ENCODE measurements at regions of chr4 and their contacts with region 1.

Region 1: GRCh38 chr4:141174457-141174856 is 41.2 kb upstream of the RNF150 start:
- DNase-seq: no peak
- ATAC-seq: peak; percentile 27; the same call in 2 of the 3 replicates
- H3K4me3 ChIP-seq: no peak overlapping the region
- H3K27ac ChIP-seq: no peak overlapping the region
- H3K4me1 ChIP-seq: no peaks in the 10 kb centered on the region
- H3K27me3 ChIP-seq: no peaks in the 10 kb centered on the region; a peak in 1 of 4 replicates
- CTCF ChIP-seq: no peak
- EP300 ChIP-seq: no peak
- POLR2A ChIP-seq: no peak
- RAD21 ChIP-seq: no peak

Region 2: GRCh38 chr4:141011901-141012315 is 162.5 kb before region 1 on chr4:
- CTCF ChIA-PET with region 1: no interaction called
- POLR2A ChIA-PET with region 1: no interaction called
- RAD21 ChIA-PET with region 1: no interaction called
- SMC1A ChIA-PET with region 1: no interaction called
- in situ Hi-C with region 1: no loop called
- intact Hi-C with region 1: no loop called
- DNase-seq: no peak
- ATAC-seq: no peak
- H3K4me3 ChIP-seq: no peak overlapping the region
- H3K27ac ChIP-seq: no peak overlapping the region
- H3K4me1 ChIP-seq: no peaks in the 10 kb centered on the region
- H3K27me3 ChIP-seq: no peaks in the 10 kb centered on the region
- CTCF ChIP-seq: no peak
- EP300 ChIP-seq: no peak
- POLR2A ChIP-seq: no peak
- RAD21 ChIP-seq: no peak

Region 3: DNA sequence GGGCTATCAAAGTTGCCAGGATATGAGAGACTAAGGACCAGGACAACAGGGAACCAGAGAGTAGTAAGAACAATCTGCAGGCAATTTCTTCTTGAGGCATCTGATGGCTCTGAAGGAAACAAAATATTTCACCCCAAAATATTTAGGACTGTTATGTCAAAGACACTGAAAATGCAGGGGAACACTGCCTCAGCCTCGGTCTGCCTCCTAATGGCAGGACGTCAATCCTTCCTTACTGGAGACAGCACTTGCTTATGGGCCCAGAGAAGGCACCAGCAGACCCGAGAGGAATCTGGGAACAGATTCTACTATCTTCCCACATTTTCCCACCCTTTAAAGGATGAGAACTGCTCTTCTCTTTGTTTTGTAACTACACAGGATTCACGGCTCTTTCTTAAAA is 64.5 kb before region 1 on chr4:
- CTCF ChIA-PET with region 1: no interaction called
- POLR2A ChIA-PET with region 1: no interaction called
- RAD21 ChIA-PET with region 1: no interaction called
- SMC1A ChIA-PET with region 1: no interaction called
- in situ Hi-C with region 1: no loop called
- intact Hi-C with region 1: no loop called
- DNase-seq: no peak
- ATAC-seq: no peak
- H3K4me3 ChIP-seq: no peak overlapping the region
- H3K27ac ChIP-seq: no peak overlapping the region
- H3K4me1 ChIP-seq: no peaks in the 10 kb centered on the region
- H3K27me3 ChIP-seq: no peaks in the 10 kb centered on the region
- CTCF ChIP-seq: no peak
- EP300 ChIP-seq: no peak
- POLR2A ChIP-seq: no peak
- RAD21 ChIP-seq: no peak

Region 4: DNA sequence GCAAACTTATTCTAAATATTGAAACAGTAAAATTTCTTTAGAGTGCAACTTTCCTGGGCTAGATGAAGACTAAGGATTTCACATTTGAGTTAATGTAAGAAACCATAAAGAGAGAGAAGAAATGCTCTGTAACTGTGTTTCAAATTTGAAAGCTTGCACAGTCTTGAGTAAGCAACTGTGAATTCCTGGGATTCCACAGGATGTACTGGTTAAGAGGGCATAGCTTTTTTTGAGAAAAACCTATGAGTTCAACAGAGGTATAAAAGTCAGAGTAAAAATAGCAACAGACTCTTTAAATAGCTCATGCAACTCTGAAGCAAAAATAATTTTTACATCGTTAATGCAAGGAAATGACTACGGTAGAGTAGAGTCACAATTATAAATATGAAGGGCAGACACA is 71.8 kb after region 1 on chr4:
- CTCF ChIA-PET with region 1: no interaction called
- POLR2A ChIA-PET with region 1: no interaction called
- RAD21 ChIA-PET with region 1: no interaction called
- SMC1A ChIA-PET with region 1: no interaction called
- in situ Hi-C with region 1: no loop called
- intact Hi-C with region 1: loop called (anchors 2 kb)
- DNase-seq: no peak
- ATAC-seq: no peak
- H3K4me3 ChIP-seq: no peak overlapping the region
- H3K27ac ChIP-seq: no peak overlapping the region
- H3K4me1 ChIP-seq: no peaks in the 10 kb centered on the region
- H3K27me3 ChIP-seq: no peaks in the 10 kb centered on the region
- CTCF ChIP-seq: no peak
- EP300 ChIP-seq: no peak
- POLR2A ChIP-seq: no peak
- RAD21 ChIP-seq: no peak

Region 5: GRCh38 chr4:141439223-141439622 is 264.8 kb after region 1 on chr4:
- CTCF ChIA-PET with region 1: no interaction called
- POLR2A ChIA-PET with region 1: no interaction called
- RAD21 ChIA-PET with region 1: no interaction called
- SMC1A ChIA-PET with region 1: no interaction called
- in situ Hi-C with region 1: no loop called
- intact Hi-C with region 1: no loop called
- DNase-seq: no peak
- ATAC-seq: no peak
- H3K4me3 ChIP-seq: no peak overlapping the region
- H3K27ac ChIP-seq: no peak overlapping the region
- H3K4me1 ChIP-seq: no peaks in the 10 kb centered on the region
- H3K27me3 ChIP-seq: no peaks in the 10 kb centered on the region
- CTCF ChIP-seq: no peak
- EP300 ChIP-seq: no peak
- POLR2A ChIP-seq: no peak
- RAD21 ChIP-seq: no peak

Measured in GM12878 (cell line).